CD4-positive, alpha-beta T cell (primary cell): ENCODE measurements at regions of chr22 and their contacts with region 1.

Region 1: GRCh38 chr22:43142880-43143562 is at the start of gene MCAT:
- DNase-seq: peak; percentile 64 to 88 (median 73)
- ATAC-seq: peak; percentile 86
- H3K4me3 ChIP-seq: peak within 1 kb of the TSS; percentile 75
- H3K4me3 Mint-ChIP-seq: peak within 1 kb of the TSS; percentile 91
- H3K27ac ChIP-seq: peak within 1 kb of the TSS; percentile 65 to 67
- H3K27ac Mint-ChIP-seq: peak within 1 kb of the TSS; percentile 95
- H3K4me1 ChIP-seq: peaks cover 24% of the 10 kb centered on the region
- H3K4me1 Mint-ChIP-seq: peaks cover 28% of the 10 kb centered on the region
- H3K27me3 ChIP-seq: no peaks in the 10 kb centered on the region
- H3K27me3 Mint-ChIP-seq: no peaks in the 10 kb centered on the region
- CTCF ChIP-seq: no peak
- total RNA-seq, gene MCAT: 16.1 to 18.0 TPM

Region 2: GRCh38 chr22:43014869-43015676 is 127.9 kb before region 1 on chr22 and contains the start of gene PACSIN2:
- CTCF ChIA-PET with region 1: no interaction called
- POLR2A ChIA-PET with region 1: interaction called, 5 read pairs
- intact Hi-C with region 1: loop called in 1 of 2 experiments (anchors 10 kb)
- DNase-seq: peak; percentile 97 to 99 (median 99)
- ATAC-seq: peak; percentile 97
- H3K4me3 ChIP-seq: peak within 1 kb of the TSS; percentile 91
- H3K4me3 Mint-ChIP-seq: peak within 1 kb of the TSS; percentile 99
- H3K27ac ChIP-seq: peak within 1 kb of the TSS; percentile 75
- H3K27ac Mint-ChIP-seq: peak within 1 kb of the TSS; percentile 98
- H3K4me1 ChIP-seq: peaks cover 23% of the 10 kb centered on the region
- H3K4me1 Mint-ChIP-seq: peaks cover 38% of the 10 kb centered on the region
- H3K27me3 ChIP-seq: no peaks in the 10 kb centered on the region
- H3K27me3 Mint-ChIP-seq: no peaks in the 10 kb centered on the region
- CTCF ChIP-seq: no peak
- total RNA-seq, gene PACSIN2: 23.3 to 25.5 TPM

Region 3: DNA sequence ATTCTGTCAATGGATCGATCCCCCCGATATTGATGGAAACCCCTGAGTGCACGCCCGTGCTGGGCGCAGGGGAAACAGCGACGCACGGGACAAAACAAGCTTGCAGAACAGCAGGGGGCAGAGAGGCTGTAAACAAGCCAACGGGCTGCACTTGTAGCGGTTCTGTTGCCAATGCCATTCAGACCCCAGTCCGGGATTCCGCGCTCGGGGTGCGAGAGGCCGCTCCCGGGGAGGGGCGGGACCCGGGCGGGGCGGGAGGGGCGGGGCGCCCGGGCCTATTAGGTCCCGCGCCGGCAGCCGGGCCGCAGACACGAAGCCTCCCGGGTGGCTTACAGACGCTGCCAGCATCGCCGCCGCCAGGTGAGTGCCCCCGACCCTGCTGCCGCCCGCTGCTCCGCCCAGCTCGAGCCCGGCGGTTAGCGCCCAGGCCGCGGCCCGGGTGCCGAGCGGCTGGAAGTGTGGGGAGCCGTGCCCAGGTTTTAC is 32.5 kb before region 1 on chr22 and contains the start of gene BIK:
- CTCF ChIA-PET with region 1: no interaction called
- POLR2A ChIA-PET with region 1: no interaction called
- intact Hi-C with region 1: loop called in 1 of 2 experiments (anchors 1 kb)
- DNase-seq: peak in 13 of 14 experiments; percentile 23 to 72 (median 32)
- ATAC-seq: peak; percentile 48
- H3K4me3 ChIP-seq: peak within 1 kb of the TSS; percentile 58
- H3K4me3 Mint-ChIP-seq: peak within 1 kb of the TSS; percentile 87
- H3K27ac ChIP-seq: no peak within 1 kb of the TSS
- H3K27ac Mint-ChIP-seq: peak within 1 kb of the TSS; percentile 51
- H3K4me1 ChIP-seq: peaks cover 14% of the 10 kb centered on the region
- H3K4me1 Mint-ChIP-seq: peaks cover 9% of the 10 kb centered on the region
- H3K27me3 ChIP-seq: no peaks in the 10 kb centered on the region
- H3K27me3 Mint-ChIP-seq: no peaks in the 10 kb centered on the region
- CTCF ChIP-seq: peak; percentile 26
- total RNA-seq, gene BIK: 1.6 to 2.1 TPM